Heart left ventricle (tissue), 16 donors: ENCODE measurements at regions of chr3 and their contacts with region 1.

Region 1: DNA sequence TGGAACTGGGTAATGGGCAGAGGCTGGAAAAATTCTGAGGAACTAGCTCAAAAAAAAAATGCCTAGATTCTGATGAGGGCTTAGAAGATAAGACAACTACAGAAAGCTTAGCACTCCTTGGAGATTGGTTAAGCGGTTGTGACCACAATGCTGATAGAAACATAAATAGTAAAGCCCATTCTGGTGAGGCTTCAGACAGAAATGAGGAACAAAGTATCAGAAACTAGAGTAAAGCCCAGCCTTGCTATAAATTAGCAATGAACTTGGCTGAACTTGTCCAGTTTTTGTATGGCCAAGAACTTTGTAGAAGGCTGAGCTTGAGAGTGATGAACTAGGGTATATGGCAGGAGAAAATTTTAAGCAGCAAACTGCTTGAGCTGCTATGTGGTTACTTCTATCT is 25.4 kb downstream of the GOLGB1 start:
- DNase-seq: no peak
- ATAC-seq: no peak
- H3K4me3 ChIP-seq: no peak overlapping the region
- H3K27ac ChIP-seq: no peak overlapping the region
- H3K4me1 ChIP-seq: peaks cover 0 to 12% (median 0%) of the 10 kb centered on the region in 12 donors
- H3K27me3 ChIP-seq: no peaks in the 10 kb centered on the region
- CTCF ChIP-seq: no peak
- POLR2A ChIP-seq: no peak

Region 2: GRCh38 chr3:121660356-121661171 is 63.6 kb before region 1 on chr3 and contains the start of gene HCLS1:
- intact Hi-C with region 1: loop called in 1 of 10 experiments (anchors 10 kb)
- DNase-seq: peak; percentile 45 to 69 (median 54)
- ATAC-seq: peak; percentile 41 to 77 (median 60)
- H3K4me3 ChIP-seq: peak within 1 kb of the TSS in 11 of 12 donors; percentile 18 to 63 (median 38)
- H3K27ac ChIP-seq: peak within 1 kb of the TSS; percentile 11 to 97 (median 50)
- H3K4me1 ChIP-seq: peaks cover 0 to 43% (median 14%) of the 10 kb centered on the region in 12 donors
- H3K27me3 ChIP-seq: no peaks in the 10 kb centered on the region
- CTCF ChIP-seq: no peak
- POLR2A ChIP-seq: peak in 1 of 2 donors; percentile 51
- total RNA-seq, gene HCLS1: 7.4 to 72.4 (median 10.6) TPM